ENCODE measurements at regions of chr2 and their contacts with region 1.

Region 1: DNA sequence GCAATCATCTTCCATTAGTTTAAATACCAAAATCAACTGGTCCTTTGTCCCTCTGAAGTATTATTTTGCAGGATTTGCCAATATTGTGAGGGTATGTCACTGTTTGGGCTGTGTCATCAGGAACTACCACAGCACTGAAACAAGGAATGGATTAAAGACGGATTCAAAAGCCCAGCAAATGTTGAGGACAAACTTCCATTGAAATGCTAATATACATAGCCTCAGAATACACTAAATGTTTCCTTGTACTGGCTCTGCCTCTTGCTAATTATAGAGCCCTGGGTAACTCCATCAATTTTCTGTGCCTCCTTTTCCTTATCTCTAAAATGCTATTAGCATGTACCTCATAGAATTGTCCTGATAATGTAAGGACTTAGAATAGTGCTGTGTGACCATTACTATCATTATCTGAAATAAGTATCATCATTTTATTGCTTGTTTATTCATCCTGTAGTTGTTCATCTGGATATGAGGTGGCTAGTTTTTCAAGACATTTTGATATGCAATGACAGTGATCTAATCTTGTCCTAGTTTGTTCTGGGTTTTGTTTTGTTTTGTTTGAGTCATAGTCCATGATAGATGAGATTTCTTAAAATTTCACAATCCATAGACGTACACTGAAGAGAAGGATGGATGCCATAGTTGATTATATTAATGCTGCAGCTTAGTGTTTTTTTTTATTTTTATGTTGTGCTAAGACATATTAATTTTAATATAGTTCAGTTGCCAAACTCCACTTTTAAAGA is 333.4 kb upstream of the KCNH7 start:
- DNase-seq: no peak
- H3K4me3 ChIP-seq: no peak overlapping the region
- H3K27ac ChIP-seq: no peak overlapping the region
- H3K4me1 ChIP-seq: no peaks in the 10 kb centered on the region
- H3K27me3 ChIP-seq: peaks cover 0 to 9% (median 7%) of the 10 kb centered on the region in 4 experiments; a peak in 6 of 7 replicates
- CTCF ChIP-seq: no peak
- EP300 ChIP-seq: no peak
- POLR2A ChIP-seq: no peak
- RAD21 ChIP-seq: no peak

Region 2: GRCh38 chr2:163155279-163155883 is 16.6 kb before region 1 on chr2:
- CTCF ChIA-PET with region 1: interaction called, 44 read pairs
- POLR2A ChIA-PET with region 1: no interaction called
- DNase-seq: no peak
- H3K4me3 ChIP-seq: no peak overlapping the region
- H3K27ac ChIP-seq: no peak overlapping the region
- H3K4me1 ChIP-seq: no peaks in the 10 kb centered on the region
- H3K27me3 ChIP-seq: no peaks in the 10 kb centered on the region
- CTCF ChIP-seq: peak in 2 of 3 experiments; percentile 33 to 51; a peak in 2 of 4 replicates
- EP300 ChIP-seq: no peak
- POLR2A ChIP-seq: no peak
- RAD21 ChIP-seq: peak; percentile 65 to 67

Region 3: GRCh38 chr2:163182764-163183354 is 10.9 kb after region 1 on chr2:
- CTCF ChIA-PET with region 1: interaction called, 40 read pairs
- POLR2A ChIA-PET with region 1: no interaction called
- DNase-seq: no peak
- H3K4me3 ChIP-seq: no peak overlapping the region
- H3K27ac ChIP-seq: no peak overlapping the region
- H3K4me1 ChIP-seq: peaks cover 0 to 2% (median 0%) of the 10 kb centered on the region in 4 experiments; a peak in 3 of 7 replicates
- H3K27me3 ChIP-seq: no peaks in the 10 kb centered on the region
- CTCF ChIP-seq: peak in 2 of 3 experiments; percentile 24 to 50; a peak in 2 of 4 replicates
- EP300 ChIP-seq: no peak
- POLR2A ChIP-seq: no peak
- RAD21 ChIP-seq: peak in 1 of 2 experiments; percentile 53; a peak in 3 of 4 replicates

Region 4: DNA sequence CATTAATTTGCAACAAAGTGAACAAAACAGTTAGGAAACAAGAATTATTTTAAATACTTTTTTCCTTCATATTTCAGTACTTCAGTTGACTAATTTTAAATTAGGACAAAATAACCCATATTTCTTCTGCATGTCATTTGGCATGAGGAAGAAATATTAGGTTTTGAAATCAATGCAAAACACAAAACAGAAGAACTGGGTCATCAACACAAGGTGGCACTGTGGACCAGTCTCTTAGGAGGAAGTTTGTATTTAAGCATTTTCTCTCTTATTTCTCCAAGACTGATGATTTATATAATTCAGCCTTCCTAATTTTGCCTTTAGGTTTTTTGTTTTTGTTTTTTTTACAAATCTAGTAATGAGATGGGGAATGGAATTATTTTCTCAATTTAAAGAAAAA is 19.4 kb after region 1 on chr2:
- CTCF ChIA-PET with region 1: interaction called, 10 read pairs
- POLR2A ChIA-PET with region 1: no interaction called
- DNase-seq: no peak
- H3K4me3 ChIP-seq: no peak overlapping the region
- H3K27ac ChIP-seq: no peak overlapping the region
- H3K4me1 ChIP-seq: peaks cover 0 to 2% (median 0%) of the 10 kb centered on the region in 4 experiments; a peak in 3 of 7 replicates
- H3K27me3 ChIP-seq: no peaks in the 10 kb centered on the region
- CTCF ChIP-seq: peak in 2 of 3 experiments; percentile 51 to 56; a peak in 2 of 4 replicates
- EP300 ChIP-seq: no peak
- POLR2A ChIP-seq: no peak
- RAD21 ChIP-seq: peak; percentile 81 to 83

Region 5: GRCh38 chr2:163291790-163292189 is 119.8 kb after region 1 on chr2:
- CTCF ChIA-PET with region 1: no interaction called
- POLR2A ChIA-PET with region 1: no interaction called
- DNase-seq: no peak
- H3K4me3 ChIP-seq: no peak overlapping the region
- H3K27ac ChIP-seq: no peak overlapping the region
- H3K4me1 ChIP-seq: no peaks in the 10 kb centered on the region
- H3K27me3 ChIP-seq: no peaks in the 10 kb centered on the region
- CTCF ChIP-seq: peak in 1 of 3 experiments; percentile 29; a peak in 1 of 4 replicates
- EP300 ChIP-seq: no peak
- POLR2A ChIP-seq: no peak
- RAD21 ChIP-seq: no peak; a peak in 1 of 4 replicates